HepG2 (cell line): ENCODE measurements at regions of chr19 and their contacts with region 1.

Region 1: GRCh38 chr19:2944775-2945574 is at the start of gene ZNF77:
- DNase-seq: peak; percentile 99
- ATAC-seq: peak; percentile 97
- H3K4me3 ChIP-seq: peak within 1 kb of the TSS; percentile 84 to 90 (median 88)
- H3K27ac ChIP-seq: peak within 1 kb of the TSS; percentile 86
- H3K4me1 ChIP-seq: peaks cover 30% of the 10 kb centered on the region
- H3K27me3 ChIP-seq: no peaks in the 10 kb centered on the region; a peak in 1 of 5 replicates
- CTCF ChIP-seq: 0 out of 2 replicates have a peak, but pooled peaks have one; percentile 13
- EP300 ChIP-seq: no peak
- POLR2A ChIP-seq: peak; percentile 64 to 89; a peak in 3 of 4 replicates
- RAD21 ChIP-seq: 0 out of 2 replicates have a peak, but pooled peaks have one; percentile 34
- total RNA-seq, gene ZNF77: 11.5 and 12.6 TPM in 2 replicates

Region 2: DNA sequence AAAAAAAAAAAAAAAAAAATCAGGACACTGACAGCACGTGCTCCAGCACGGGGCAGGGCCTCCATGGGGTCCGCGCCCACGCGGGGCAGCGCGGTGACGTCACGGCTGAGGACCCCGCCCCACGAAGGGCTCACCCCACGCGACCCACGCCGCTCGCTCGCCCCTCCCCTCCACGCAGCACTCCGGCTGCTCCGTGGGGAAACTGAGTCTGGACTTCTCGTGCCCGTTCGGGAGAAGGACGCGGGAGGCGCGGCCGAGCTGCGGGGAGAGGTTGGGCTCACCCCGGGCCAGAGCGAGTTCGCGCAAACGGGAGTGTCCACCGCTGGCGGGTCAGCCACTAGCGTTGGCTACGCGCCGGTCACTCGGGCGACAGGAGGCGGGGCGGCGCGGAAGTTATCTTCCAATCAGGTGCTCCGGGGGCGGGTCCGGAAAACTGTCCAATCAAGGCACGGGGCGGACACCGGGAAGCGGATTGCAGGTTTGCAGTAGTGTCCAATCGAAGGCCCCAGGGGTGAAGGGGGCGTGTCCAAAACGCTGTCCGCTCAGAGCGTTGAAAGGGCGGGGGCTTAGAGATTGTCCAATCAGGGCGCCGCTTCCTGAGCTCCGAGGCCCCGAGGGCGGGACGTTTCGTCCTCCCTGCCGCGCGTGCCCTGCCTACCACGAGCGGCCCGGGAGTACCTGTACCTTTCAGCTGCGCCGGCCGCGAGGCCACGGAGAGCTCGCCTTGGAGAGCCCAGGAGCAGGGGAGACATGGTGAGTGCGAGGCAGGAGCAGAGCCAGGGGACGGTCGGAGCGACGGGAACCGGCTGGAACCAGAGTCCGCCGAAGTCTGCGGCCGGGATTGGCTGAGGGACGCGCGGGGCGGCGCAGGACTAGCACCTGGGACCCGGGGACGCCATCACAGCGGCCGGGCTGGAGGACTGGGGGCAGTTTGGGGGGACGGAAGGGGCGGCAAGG is 44.4 kb before region 1 on chr19 and contains the start of gene ZNF57:
- CTCF ChIA-PET with region 1: no interaction called
- POLR2A ChIA-PET with region 1: interaction called, 26 read pairs
- in situ Hi-C with region 1: no loop called
- intact Hi-C with region 1: loop called (anchors 1 kb)
- DNase-seq: peak; percentile 98
- ATAC-seq: peak; percentile 87
- H3K4me3 ChIP-seq: peak within 1 kb of the TSS; percentile 86 to 98 (median 91)
- H3K27ac ChIP-seq: peak within 1 kb of the TSS; percentile 88
- H3K4me1 ChIP-seq: peaks cover 49% of the 10 kb centered on the region
- H3K27me3 ChIP-seq: no peaks in the 10 kb centered on the region
- CTCF ChIP-seq: 0 out of 2 replicates have a peak, but pooled peaks have one; percentile 4
- EP300 ChIP-seq: no peak
- POLR2A ChIP-seq: peak; percentile 67 to 86
- RAD21 ChIP-seq: peak; percentile 66
- total RNA-seq, gene ZNF57: 17.5 and 25.8 TPM in 2 replicates